Mammary epithelial cell (primary cell): ENCODE measurements at regions of chr17 and their contacts with region 1.

Region 1: GRCh38 chr17:36629252-36629847 is 28.0 kb downstream of the MRM1 start:
- DNase-seq: peak; percentile 37
- H3K4me3 ChIP-seq: no peak overlapping the region
- H3K27ac ChIP-seq: no peak overlapping the region
- H3K4me1 ChIP-seq: no peaks in the 10 kb centered on the region
- H3K27me3 ChIP-seq: no peaks in the 10 kb centered on the region
- CTCF ChIP-seq: peak; percentile 97 to 98

Region 2: GRCh38 chr17:36601303-36602029 is 27.9 kb before region 1 on chr17 and contains the start of gene MRM1:
- CTCF ChIA-PET with region 1: interaction called, 4 read pairs
- dilution Hi-C with region 1: no loop called
- in situ Hi-C with region 1: no loop called
- intact Hi-C with region 1: loop called (anchors 1 kb)
- DNase-seq: peak; percentile 89
- H3K4me3 ChIP-seq: peak within 1 kb of the TSS; percentile 73 to 90 (median 84)
- H3K27ac ChIP-seq: peak within 1 kb of the TSS; percentile 69
- H3K4me1 ChIP-seq: peaks cover 13% of the 10 kb centered on the region
- H3K27me3 ChIP-seq: no peaks in the 10 kb centered on the region
- CTCF ChIP-seq: peak in 1 of 2 donors; percentile 23
- total RNA-seq, gene MRM1: 4.3 to 10.1 TPM

Region 3: DNA sequence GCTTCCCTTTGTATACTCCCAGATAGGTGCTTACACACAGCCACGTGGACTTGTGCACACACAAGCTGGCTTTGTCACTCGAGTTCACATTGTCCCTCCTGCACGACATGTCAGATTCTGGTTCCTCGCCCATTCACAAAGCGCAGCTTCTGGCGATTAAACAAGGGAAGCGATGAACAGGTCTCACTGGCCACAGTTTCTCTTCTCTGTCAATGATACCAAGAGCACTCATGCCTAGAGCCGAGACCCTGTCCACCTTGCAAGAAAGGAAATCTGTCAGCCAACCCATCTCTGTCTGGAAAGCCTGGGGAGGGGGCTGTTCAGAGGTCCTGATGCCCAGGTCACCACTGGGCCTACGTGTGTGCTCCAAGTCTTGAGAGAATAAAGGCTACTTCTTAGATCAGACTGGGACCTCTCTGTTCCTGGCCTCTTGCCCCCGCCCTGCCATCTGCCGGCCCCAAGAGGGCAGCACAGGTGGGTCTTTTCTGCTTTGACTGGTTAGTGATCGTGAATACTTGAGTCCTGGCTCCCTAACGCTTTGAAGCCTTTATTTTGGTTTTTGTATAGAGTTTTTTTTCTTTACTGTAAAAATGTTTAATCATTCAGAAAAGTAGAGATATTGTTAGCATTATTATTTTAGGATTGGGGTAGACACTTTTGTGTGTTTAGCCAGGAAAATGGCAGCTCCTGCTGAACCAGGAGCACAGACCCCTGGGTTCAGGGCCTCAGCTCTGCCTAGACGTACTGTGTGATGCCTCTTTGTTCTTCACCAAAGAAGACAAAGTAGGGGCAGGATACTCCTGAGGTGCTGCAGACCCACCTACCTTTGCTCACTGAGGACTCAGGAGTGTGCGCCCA is 76.8 kb after region 1 on chr17:
- CTCF ChIA-PET with region 1: no interaction called
- dilution Hi-C with region 1: no loop called
- in situ Hi-C with region 1: no loop called
- intact Hi-C with region 1: loop called (anchors 1 kb)
- DNase-seq: peak; percentile 14
- H3K4me3 ChIP-seq: no peak overlapping the region
- H3K27ac ChIP-seq: no peak overlapping the region
- H3K4me1 ChIP-seq: no peaks in the 10 kb centered on the region
- H3K27me3 ChIP-seq: peaks cover 3% of the 10 kb centered on the region
- CTCF ChIP-seq: peak; percentile 74 to 76

Region 4: DNA sequence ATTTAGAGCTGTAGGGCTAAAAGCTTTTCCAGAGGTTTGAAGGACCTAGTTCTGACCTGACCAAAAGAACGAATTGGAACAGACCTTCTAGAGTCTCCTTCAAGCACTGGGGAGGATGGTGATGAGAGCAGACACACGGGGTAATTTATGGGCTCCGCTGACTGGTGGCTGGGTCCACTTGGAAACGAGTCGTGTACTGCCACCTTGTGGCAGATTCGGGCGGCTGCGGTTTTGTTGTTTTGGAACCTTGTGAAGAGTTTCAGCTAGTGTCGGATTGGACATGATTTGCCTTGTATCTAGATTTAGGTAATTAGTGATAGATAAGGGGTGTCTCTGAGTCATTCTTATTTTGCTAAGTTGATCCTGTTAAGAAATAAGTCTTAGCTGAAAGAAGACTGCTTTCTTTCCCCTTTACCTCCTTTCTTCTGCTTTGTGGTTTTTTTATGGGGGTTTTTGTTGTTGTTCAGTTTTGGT is 418.3 kb after region 1 on chr17:
- CTCF ChIA-PET with region 1: no interaction called
- dilution Hi-C with region 1: no loop called
- in situ Hi-C with region 1: loop called (anchors 10 kb)
- intact Hi-C with region 1: loop called (anchors 1 kb)
- DNase-seq: peak; percentile 57
- H3K4me3 ChIP-seq: no peak overlapping the region
- H3K27ac ChIP-seq: no peak overlapping the region
- H3K4me1 ChIP-seq: no peaks in the 10 kb centered on the region
- H3K27me3 ChIP-seq: no peaks in the 10 kb centered on the region
- CTCF ChIP-seq: peak; percentile 90

Region 5: GRCh38 chr17:37239690-37240334 is 610.5 kb after region 1 on chr17:
- CTCF ChIA-PET with region 1: no interaction called
- dilution Hi-C with region 1: no loop called
- in situ Hi-C with region 1: no loop called
- intact Hi-C with region 1: loop called (anchors 5 kb)
- DNase-seq: no peak
- H3K4me3 ChIP-seq: no peak overlapping the region
- H3K27ac ChIP-seq: no peak overlapping the region
- H3K4me1 ChIP-seq: no peaks in the 10 kb centered on the region
- H3K27me3 ChIP-seq: no peaks in the 10 kb centered on the region
- CTCF ChIP-seq: peak; percentile 61 to 67